ENCODE measurements at regions of chr1 and their contacts with region 1.

Region 1: DNA sequence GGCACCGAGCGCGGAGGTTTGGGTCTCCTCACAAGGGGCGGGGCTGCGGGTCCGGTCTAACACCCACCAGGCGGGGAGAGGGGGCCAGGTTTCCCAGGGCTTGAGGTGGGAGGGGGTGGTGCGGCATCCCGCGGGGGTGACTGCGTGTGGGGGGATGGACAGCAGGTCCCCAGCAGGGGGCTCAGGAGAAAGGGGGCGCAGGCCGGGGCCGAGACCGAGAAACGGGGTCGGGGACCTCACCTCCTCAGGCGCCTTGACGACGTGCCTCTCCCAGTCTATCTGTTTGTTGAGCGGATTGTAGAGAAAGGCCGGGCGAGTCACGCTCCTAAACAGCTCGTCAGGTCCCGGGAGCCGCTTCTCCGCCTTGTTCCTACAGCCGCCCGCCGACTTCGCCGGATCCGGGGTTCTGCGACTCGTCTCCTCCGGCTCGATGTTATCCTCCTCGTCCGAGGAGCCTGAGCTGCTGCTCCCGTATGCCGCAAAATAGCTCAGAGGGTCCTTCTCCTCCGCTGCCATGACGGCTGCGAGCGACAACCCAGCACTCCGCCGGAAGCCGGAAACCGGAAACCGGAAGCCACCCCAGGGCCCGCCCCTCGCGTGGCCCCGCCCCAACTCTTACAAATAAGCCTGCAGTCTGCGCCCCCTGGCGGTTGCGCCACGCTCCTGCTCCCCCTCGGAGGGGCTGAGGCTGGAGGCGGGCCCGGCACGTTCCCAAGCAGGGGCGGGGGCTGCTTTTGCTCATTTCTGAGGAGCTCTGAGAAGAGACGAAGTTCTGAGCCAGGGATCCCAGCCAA is at the start of gene C1orf52:
- DNase-seq: peak; percentile 96

Region 2: GRCh38 chr1:84944767-84945486 is 314.4 kb before region 1 on chr1:
- CTCF ChIA-PET with region 1: interaction called, 48 read pairs
- POLR2A ChIA-PET with region 1: interaction called, 4 read pairs
- DNase-seq: peak; percentile 83

Region 3: GRCh38 chr1:85109475-85109874 is 149.8 kb before region 1 on chr1:
- CTCF ChIA-PET with region 1: interaction called, 55 read pairs
- POLR2A ChIA-PET with region 1: interaction called, 18 read pairs
- DNase-seq: peak; percentile 84

Region 4: GRCh38 chr1:85142753-85143152 is 116.6 kb before region 1 on chr1:
- CTCF ChIA-PET with region 1: no interaction called
- POLR2A ChIA-PET with region 1: no interaction called
- DNase-seq: no peak

Region 5: DNA sequence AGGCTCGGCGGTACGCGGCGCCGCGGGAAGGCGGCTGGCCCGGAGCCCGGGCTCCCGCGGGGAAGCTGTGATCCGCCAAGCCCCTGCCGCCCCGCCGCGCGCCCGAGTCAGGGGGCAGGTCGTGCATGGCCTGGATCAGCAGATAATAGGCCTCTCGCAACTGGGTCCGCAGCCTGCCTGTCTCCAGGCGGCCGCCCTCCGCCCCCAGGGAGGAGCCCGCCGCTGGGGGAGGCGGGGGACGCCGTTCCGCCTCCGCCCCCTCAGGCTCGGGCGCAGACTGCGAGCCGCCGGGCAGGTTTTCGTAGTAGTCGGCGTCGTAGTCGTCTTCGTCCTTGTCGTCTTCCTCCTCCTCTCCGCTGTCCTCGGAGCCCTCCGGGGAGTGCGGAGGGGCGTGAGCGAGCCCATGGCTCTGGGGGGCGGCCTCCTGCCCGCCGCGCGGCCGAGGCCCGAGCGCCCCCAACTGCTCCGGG is 58.4 kb before region 1 on chr1 and contains the start of gene SYDE2:
- CTCF ChIA-PET with region 1: interaction called, 3 read pairs
- POLR2A ChIA-PET with region 1: interaction called, 16 read pairs
- DNase-seq: peak; percentile 91

Region 6: GRCh38 chr1:85240174-85240601 is 19.1 kb before region 1 on chr1:
- CTCF ChIA-PET with region 1: interaction called, 10 read pairs
- POLR2A ChIA-PET with region 1: interaction called, 5 read pairs
- DNase-seq: no peak

Region 7: DNA sequence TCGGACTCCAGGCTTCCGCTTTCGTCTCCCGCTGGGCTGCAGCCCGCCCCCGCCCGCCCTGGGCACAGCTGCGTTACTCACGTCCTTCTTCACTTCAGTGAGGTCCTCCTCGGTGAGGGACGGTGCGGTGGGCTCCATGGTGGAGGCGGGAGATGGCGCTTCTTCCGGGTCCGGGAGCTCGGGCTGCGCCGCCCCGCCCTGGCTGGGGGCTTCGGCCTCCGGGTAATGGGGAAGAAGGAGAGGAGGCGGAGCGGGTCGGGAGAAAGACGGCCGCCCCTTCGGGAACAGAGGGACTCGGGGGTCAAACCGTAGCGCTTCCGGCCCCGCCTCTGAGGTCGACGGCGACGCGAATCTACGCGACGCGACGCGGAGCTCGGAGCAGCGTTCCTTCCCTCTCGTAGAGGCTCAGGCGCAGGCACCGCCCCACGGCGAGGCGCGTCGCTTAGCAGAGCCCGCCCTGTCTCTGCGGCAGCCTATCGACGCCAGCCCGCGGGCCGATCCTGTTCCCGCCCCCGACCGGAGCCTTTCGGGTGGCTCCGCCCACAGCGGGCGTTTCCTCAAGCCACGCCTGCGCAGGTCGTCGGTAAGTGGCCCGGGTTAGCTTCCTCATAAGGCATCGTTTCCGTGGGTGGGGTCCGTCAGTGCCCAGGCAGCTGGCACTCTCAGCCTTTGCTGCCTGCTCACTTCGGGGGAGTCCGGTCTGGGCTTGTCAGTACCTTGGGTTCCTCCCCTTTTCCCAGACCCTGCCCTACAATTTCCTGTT is 17.1 kb after region 1 on chr1 and contains the start of gene BCL10:
- CTCF ChIA-PET with region 1: interaction called, 20 read pairs
- POLR2A ChIA-PET with region 1: interaction called, 26 read pairs
- DNase-seq: peak; percentile 99

Region 8: GRCh38 chr1:85599076-85599491 is 339.8 kb after region 1 on chr1:
- CTCF ChIA-PET with region 1: no interaction called
- POLR2A ChIA-PET with region 1: no interaction called
- DNase-seq: no peak

Measured in HEK293T (cell line).